Mammary epithelial cell (primary cell): ENCODE measurements at regions of chr9 and their contacts with region 1.

Region 1: DNA sequence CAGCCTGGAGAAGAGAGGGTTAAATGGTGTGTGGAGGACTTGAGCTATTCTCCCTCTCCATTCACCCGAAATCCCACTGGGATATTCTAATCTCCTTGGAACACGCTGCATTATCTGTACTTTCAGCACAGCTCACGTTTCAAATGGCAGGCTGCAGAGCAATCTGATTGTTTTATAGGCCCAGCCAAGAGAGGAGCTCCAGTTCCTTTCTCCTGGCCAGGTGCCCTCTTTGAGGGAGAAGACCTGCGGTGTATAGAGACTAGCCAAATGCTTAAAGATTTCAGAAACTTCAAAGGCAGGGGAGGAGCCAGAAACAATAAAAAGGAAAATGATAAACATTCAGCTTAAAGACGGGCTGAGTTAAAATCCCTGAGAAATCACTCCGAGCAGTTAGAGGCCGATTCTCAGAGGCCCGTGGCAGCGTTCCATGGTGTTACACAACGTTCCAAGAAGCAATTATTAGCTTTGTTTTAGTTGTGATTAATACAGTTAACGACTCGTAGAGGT is 564.0 kb upstream of the KLF4 start:
- DNase-seq: peak; percentile 76
- H3K4me3 ChIP-seq: no peak overlapping the region
- H3K27ac ChIP-seq: peak overlapping the region; percentile 79
- H3K4me1 ChIP-seq: peaks cover 76% of the 10 kb centered on the region
- H3K27me3 ChIP-seq: no peaks in the 10 kb centered on the region
- CTCF ChIP-seq: no peak

Region 2: DNA sequence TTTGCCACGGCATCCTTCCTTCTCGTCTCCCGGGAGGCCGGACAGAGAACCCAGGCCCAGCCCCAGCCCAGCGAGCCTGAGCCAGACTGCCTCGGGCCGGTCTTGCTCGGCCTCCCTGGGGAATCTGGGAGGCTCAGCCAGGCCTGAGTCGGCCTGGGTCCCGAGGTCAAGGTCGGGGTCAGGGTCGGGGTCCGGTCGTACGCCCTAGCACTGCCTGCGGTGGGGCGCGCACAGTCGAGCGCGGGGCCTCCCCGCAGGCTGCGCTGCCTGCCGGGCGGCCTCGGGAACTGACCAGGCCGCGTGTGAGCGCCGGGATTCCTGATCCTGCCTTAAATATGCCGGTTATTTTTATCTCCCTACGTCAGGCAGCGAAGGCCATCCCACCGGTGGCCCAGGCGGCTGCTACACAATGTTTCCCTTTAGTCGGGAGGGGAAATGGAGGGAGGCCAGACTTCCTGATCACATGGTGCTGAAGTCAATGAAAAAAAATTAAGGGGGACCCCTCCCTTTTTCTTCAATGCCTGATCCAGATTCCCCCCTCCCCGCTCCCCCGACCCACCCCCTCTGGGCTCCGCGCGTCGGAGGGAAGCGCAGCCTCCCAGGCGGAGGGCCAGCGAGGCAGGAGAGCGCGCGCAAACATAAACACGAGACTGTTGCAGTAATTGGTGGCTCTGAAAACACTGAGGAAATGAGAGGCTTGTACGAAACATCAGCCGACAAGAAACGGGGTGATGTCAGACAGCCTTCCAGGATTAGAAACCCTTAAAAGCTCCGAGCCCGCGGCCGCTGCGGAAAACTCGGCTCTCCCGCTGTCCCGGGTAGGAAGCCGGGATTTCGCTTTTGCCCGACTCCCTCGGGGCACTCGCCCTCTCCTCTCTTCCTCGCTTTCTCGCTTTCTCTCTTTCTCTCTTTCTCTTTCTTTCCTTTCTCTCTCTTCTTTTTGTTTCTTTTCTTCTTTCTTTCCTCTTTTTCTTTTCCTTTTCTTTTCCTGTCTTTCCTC is 415.9 kb before region 1 on chr9:
- CTCF ChIA-PET with region 1: no interaction called
- dilution Hi-C with region 1: no loop called
- in situ Hi-C with region 1: no loop called
- intact Hi-C with region 1: loop called (anchors 10 kb)
- DNase-seq: peak; percentile 50
- H3K4me3 ChIP-seq: peak overlapping the region; percentile 39 to 68 (median 54)
- H3K27ac ChIP-seq: no peak overlapping the region
- H3K4me1 ChIP-seq: no peaks in the 10 kb centered on the region
- H3K27me3 ChIP-seq: no peaks in the 10 kb centered on the region
- CTCF ChIP-seq: no peak

Region 3: DNA sequence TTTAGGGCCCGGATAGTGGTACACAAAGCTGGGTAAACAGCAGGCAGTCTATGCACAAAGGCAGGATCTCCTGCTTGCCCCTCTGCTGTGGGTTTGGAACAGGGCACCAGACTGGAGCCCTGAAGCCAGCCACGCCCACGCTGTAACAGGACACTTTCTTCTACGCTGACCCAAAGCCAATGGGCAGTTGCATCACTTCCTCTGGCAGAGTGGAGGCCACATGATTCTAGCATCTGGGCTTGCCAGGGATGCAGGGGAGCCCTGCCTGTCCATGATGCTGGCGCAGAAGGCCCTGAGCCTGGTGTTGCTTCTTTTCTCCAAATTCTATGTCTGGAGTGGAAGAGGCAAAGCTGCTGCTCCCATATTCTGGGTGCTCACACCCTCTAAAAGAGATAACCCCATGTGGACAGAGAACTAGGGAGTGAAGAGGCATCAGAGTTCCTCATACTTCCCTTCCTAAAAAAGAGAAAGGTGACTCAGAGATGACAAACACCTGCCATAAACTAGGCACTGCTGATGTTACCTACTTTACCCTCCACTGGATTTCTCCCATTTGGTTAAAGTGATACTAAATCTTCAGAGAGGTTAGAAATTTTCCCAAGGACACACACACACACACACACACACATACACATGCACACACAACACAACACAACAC is 303.7 kb before region 1 on chr9:
- CTCF ChIA-PET with region 1: no interaction called
- dilution Hi-C with region 1: no loop called
- in situ Hi-C with region 1: no loop called
- intact Hi-C with region 1: loop called (anchors 2 kb)
- DNase-seq: peak; percentile 88
- H3K4me3 ChIP-seq: no peak overlapping the region
- H3K27ac ChIP-seq: peak overlapping the region; percentile 60
- H3K4me1 ChIP-seq: peaks cover 36% of the 10 kb centered on the region
- H3K27me3 ChIP-seq: no peaks in the 10 kb centered on the region
- CTCF ChIP-seq: no peak

Region 4: DNA sequence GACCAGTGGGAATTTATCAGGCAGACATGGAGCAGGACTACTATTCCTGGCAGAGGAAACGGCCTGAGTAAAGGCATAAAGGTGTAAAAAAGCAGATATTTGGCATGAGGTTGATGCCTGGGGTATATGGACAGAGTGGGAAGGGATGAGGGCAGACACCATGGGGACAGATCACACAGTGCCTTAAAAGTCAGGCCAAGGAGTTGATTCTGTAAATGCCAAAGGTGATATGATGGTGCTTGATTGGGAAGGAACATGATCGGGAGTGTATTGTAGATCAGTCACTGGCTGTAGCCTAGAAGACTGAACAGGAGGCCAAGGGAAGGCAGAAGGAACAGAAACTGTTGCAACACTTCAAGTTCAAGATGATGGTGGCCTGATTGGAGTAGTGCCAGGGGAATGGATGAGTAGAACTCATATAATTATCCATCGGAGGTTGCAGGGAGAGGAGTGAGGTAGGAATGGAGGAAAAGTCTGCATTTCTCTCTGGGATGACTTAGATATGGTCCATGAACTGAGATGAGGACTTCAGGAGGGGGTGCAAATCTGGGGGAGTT is 30.3 kb after region 1 on chr9:
- CTCF ChIA-PET with region 1: no interaction called
- dilution Hi-C with region 1: no loop called
- in situ Hi-C with region 1: no loop called
- intact Hi-C with region 1: no loop called
- DNase-seq: no peak
- H3K4me3 ChIP-seq: no peak overlapping the region
- H3K27ac ChIP-seq: no peak overlapping the region
- H3K4me1 ChIP-seq: no peaks in the 10 kb centered on the region
- H3K27me3 ChIP-seq: no peaks in the 10 kb centered on the region
- CTCF ChIP-seq: no peak

Region 5: DNA sequence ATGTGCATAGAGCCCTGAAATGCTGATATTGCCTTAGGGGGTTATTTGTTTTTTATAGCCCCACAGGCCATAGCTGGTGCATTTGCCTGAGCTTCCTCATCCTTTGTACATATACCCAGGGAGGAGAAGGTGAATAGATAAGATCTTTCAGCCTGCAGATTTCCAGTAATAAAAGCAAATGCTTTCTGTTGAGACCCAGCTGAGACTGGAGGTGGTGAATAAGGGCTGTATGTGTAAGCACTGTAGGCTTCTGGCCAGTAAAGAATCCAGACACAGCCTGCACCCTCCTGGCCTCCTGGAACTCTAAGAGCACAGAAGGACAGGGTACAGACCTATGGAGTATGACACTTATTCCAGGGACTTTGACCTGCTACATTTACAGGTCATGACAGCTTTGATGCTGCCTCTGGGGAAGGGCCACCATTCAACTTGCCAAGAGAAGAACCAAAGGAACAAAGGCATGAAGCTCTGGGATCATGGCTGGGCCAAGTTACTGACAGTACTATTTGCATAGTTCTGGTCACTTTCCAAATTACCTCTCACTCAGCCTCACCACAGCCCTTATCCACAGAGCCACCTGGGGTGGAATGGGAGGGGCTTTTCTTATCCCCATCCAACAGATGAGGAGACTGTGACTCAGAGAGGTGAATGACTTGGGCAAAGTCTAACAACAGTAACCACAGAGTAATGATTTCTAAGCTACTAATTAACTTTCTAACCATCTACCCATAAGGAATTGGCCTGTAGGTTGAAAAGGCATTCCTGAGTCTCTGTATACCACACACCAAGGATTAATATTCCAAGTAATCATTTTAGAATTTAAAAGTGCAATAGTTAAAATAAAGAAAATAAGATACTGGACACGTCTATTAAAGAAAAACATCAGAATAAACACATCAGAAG is 40.4 kb after region 1 on chr9:
- CTCF ChIA-PET with region 1: no interaction called
- dilution Hi-C with region 1: no loop called
- in situ Hi-C with region 1: no loop called
- intact Hi-C with region 1: loop called (anchors 2 kb)
- DNase-seq: peak; percentile 95
- H3K4me3 ChIP-seq: no peak overlapping the region
- H3K27ac ChIP-seq: peak overlapping the region; percentile 85
- H3K4me1 ChIP-seq: peaks cover 16% of the 10 kb centered on the region
- H3K27me3 ChIP-seq: no peaks in the 10 kb centered on the region
- CTCF ChIP-seq: no peak

Region 6: DNA sequence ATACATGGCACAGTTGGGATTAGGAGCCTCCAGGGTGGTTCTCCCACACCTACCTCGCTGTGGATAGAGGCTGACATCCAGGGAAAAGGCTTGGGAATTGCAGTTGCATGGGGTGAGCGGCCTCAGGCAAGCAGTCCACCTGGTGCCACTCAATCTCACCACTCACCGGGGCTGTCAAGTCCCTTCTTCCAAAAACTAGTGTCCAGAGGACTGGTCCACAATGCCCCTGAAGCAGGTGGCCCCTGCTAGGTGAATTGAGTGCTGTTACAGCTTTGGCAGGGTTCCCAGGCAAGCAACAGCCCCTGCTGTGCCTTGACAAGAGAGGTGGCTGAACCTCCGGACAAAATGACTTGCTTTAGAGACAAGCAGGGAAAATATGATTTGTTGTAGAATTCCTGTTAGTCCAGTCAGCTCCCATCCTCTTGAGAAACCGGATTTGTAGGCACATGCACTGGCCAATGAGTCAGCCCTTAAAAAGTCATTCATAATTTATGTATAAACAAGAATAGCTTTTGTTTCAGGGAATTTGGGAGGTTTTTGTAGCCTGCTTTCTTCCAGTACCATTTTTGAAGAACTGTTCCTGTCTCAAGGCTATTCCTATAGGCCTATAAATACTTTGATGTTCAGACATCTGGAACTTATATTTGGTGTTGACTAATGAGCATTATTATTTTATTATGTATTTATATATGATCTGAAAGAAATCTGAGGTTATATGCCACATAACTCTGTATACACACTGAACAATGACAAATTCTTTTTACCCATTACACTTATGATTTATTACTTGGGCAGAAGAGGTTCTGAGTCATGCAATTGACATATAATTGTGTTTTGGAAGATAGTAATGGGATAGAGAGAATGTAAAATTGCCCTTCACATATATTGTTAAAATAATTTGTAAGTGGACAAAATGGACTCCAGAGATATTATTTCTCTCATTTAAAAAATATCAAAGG is 391.1 kb after region 1 on chr9:
- CTCF ChIA-PET with region 1: no interaction called
- dilution Hi-C with region 1: no loop called
- in situ Hi-C with region 1: no loop called
- intact Hi-C with region 1: loop called (anchors 10 kb)
- DNase-seq: peak; percentile 91
- H3K4me3 ChIP-seq: peak overlapping the region; percentile 3 to 42 (median 38)
- H3K27ac ChIP-seq: peak overlapping the region; percentile 84
- H3K4me1 ChIP-seq: peaks cover 37% of the 10 kb centered on the region
- H3K27me3 ChIP-seq: no peaks in the 10 kb centered on the region
- CTCF ChIP-seq: no peak

Region 7: DNA sequence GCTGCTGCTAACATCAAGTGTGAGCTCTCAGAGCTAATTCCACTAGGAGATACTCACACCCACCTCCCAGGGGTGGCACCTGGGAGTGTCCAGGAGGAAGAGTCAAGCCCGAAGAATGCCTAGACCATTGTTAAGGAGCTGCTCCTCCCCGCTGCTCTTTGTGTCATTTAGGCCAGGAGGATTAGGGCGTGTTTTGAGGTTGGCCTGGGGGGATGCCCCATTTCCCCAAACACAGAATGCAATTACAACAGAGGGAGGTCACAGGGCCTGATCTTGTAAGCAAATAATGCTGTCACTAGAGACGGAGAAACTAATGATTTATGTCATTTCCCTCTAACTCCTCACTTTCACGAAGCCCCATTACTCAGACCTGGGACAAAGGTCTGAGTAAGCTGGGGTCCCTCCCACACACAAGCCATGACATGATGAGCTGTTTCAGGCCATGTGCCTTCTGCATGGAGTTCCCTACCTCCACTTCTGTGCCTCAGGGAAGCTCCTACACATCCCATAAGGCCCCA is 489.7 kb after region 1 on chr9:
- CTCF ChIA-PET with region 1: no interaction called
- dilution Hi-C with region 1: no loop called
- in situ Hi-C with region 1: no loop called
- intact Hi-C with region 1: loop called (anchors 5 kb)
- DNase-seq: peak; percentile 99
- H3K4me3 ChIP-seq: no peak overlapping the region
- H3K27ac ChIP-seq: peak overlapping the region; percentile 96
- H3K4me1 ChIP-seq: peaks cover 25% of the 10 kb centered on the region
- H3K27me3 ChIP-seq: no peaks in the 10 kb centered on the region
- CTCF ChIP-seq: peak in 1 of 2 donors; percentile 14

Region 8: DNA sequence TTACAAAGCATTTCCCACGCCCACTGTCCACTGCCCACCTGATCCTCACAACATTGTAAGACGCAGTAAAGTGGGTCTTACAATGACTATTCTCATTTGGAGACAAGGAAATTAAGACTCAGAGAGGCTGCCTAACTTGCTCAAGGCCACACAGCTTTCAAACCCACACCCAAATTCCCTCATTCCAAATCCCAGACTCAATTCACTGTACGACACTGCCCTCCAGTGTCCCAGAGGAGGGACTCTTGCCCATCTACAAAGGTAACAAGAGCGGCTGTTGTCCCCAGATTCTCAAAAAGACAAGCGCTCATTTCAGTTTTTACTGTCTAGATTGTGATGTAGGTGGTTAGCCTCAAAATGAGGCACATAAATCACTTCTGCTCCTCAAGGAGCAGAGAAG is 617.6 kb after region 1 on chr9:
- CTCF ChIA-PET with region 1: no interaction called
- dilution Hi-C with region 1: no loop called
- in situ Hi-C with region 1: no loop called
- intact Hi-C with region 1: loop called (anchors 2 kb)
- DNase-seq: peak; percentile 58
- H3K4me3 ChIP-seq: no peak overlapping the region
- H3K27ac ChIP-seq: peak overlapping the region; percentile 73
- H3K4me1 ChIP-seq: peaks cover 35% of the 10 kb centered on the region
- H3K27me3 ChIP-seq: no peaks in the 10 kb centered on the region
- CTCF ChIP-seq: peak; percentile 68 to 78